PC-3 (cell line): ENCODE measurements at regions of chr2 and their contacts with region 1.

Region 1: DNA sequence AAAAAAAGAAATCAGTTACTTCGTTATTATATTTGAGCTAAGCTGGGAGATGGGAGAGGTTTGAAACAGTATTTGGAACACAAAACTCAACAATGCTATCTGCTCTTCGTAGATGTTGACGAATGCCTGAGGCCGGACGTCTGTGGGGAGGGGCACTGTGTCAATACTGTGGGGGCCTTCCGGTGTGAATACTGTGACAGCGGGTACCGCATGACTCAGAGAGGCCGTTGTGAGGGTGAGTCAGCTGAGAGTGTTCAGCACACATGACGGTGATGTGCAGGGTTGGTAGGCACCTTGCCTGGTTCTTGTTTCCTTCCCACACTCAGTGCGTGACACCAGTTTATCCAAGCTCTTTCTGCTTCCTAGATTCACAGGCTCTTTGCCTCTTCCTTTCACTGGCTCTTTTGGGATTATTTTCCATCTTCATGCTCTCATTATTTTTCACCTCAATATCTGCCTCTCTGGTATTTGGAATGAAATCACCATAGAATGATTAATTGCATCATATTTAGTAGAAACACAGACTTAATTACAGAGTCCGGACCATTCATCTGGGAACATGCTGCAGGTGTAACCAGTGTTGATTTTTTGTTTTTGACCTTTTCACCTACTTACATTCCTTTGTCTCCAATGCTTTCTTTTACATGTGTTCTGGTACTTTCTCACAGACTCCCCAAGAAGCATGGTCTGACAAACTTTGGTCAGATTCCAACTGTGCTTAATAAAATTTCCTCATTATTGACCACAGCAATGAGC is 200.6 kb upstream of the RASGRP3 start:
- DNase-seq: peak; percentile 99
- ATAC-seq: peak; percentile 99
- H3K4me3 ChIP-seq: no peak overlapping the region
- H3K27ac ChIP-seq: peak overlapping the region; percentile 99
- H3K4me1 ChIP-seq: peaks cover 37% of the 10 kb centered on the region
- H3K27me3 ChIP-seq: no peaks in the 10 kb centered on the region
- CTCF ChIP-seq: no peak

Region 2: DNA sequence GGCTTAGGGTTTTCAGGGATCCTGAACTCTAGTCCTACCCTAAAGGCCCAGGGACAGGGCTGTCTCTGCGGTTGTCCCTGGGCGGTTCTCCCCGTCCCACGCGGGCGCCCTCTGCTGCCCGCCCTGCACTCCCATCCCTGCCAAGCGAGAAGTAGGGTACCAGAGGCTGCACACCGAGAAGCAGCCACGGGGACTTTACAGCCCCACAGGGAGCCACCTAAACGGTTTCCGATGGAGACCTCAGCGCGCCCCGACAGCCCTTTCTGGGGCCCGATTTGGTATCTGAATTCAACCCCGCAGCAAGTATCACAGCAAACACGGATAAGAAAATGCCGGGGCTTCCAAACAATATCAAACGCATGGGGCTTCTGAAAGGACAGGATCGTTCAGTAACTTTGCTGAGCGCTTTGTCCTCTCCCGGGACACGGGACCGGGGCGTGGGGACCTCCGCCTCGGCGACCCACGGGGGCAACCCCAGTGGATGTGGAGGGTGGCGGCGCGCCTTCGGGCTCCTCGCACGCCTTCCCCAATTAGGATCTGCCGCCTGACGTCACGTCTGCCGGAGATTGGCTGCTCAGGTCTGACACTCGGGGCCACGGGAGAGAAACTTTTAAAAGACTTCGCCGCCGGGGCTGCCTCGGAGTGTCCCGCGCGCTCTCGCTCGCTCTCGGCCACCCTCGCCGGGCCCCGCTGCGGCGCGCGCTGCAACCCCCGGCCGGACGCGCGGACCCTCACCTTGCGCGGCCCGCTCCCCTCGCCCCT is 329.4 kb before region 1 on chr2 and contains the start of gene LTBP1:
- CTCF ChIA-PET with region 1: no interaction called
- POLR2A ChIA-PET with region 1: no interaction called
- intact Hi-C with region 1: loop called (anchors 10 kb)
- DNase-seq: peak; percentile 80
- ATAC-seq: peak; percentile 75
- H3K4me3 ChIP-seq: peak within 1 kb of the TSS; percentile 72
- H3K27ac ChIP-seq: 0 out of 2 replicates have a peak within 1 kb of the TSS, but pooled peaks have one; percentile 21
- H3K4me1 ChIP-seq: peaks cover 7% of the 10 kb centered on the region
- H3K27me3 ChIP-seq: no peaks in the 10 kb centered on the region
- CTCF ChIP-seq: peak; percentile 95
- total RNA-seq, gene LTBP1: 34.0 and 45.9 TPM in 2 replicates

Region 3: GRCh38 chr2:33134086-33134771 is 141.6 kb before region 1 on chr2:
- CTCF ChIA-PET with region 1: no interaction called
- POLR2A ChIA-PET with region 1: no interaction called
- intact Hi-C with region 1: loop called (anchors 2 kb)
- DNase-seq: peak; percentile 98
- ATAC-seq: peak; percentile 88
- H3K4me3 ChIP-seq: peak overlapping the region; percentile 75
- H3K27ac ChIP-seq: peak overlapping the region; percentile 89
- H3K4me1 ChIP-seq: peaks cover 57% of the 10 kb centered on the region
- H3K27me3 ChIP-seq: no peaks in the 10 kb centered on the region
- CTCF ChIP-seq: peak; percentile 51

Region 4: DNA sequence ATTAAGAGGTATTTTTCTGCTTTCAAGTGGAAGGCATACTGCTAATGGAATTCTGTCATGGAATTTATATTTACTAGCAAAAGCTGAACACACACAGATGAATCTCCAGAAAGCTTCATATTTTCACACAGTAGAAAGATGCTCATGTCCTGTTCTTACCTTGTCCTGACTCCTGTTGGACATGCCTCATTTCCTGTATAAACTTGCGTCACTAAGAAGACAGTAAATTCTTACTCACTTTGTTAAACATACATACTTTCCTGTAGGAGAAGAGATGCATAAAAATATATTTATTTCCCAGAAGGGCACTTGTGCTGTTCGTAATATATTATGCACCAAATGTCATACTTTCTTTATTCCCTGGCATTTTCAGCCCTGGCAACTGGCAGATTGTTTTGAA is 37.8 kb before region 1 on chr2:
- CTCF ChIA-PET with region 1: no interaction called
- POLR2A ChIA-PET with region 1: no interaction called
- intact Hi-C with region 1: loop called (anchors 2 kb)
- DNase-seq: peak; percentile 89
- ATAC-seq: peak; percentile 79
- H3K4me3 ChIP-seq: no peak overlapping the region
- H3K27ac ChIP-seq: peak overlapping the region; percentile 98
- H3K4me1 ChIP-seq: peaks cover 51% of the 10 kb centered on the region
- H3K27me3 ChIP-seq: no peaks in the 10 kb centered on the region
- CTCF ChIP-seq: no peak

Region 5: GRCh38 chr2:33457556-33458247 is 181.8 kb after region 1 on chr2:
- CTCF ChIA-PET with region 1: no interaction called
- POLR2A ChIA-PET with region 1: no interaction called
- intact Hi-C with region 1: no loop called
- DNase-seq: no peak
- ATAC-seq: no peak
- H3K4me3 ChIP-seq: no peak overlapping the region
- H3K27ac ChIP-seq: no peak overlapping the region
- H3K4me1 ChIP-seq: peaks cover 5% of the 10 kb centered on the region; the same call in 1 of the 2 replicates
- H3K27me3 ChIP-seq: no peaks in the 10 kb centered on the region
- CTCF ChIP-seq: no peak

Region 6: DNA sequence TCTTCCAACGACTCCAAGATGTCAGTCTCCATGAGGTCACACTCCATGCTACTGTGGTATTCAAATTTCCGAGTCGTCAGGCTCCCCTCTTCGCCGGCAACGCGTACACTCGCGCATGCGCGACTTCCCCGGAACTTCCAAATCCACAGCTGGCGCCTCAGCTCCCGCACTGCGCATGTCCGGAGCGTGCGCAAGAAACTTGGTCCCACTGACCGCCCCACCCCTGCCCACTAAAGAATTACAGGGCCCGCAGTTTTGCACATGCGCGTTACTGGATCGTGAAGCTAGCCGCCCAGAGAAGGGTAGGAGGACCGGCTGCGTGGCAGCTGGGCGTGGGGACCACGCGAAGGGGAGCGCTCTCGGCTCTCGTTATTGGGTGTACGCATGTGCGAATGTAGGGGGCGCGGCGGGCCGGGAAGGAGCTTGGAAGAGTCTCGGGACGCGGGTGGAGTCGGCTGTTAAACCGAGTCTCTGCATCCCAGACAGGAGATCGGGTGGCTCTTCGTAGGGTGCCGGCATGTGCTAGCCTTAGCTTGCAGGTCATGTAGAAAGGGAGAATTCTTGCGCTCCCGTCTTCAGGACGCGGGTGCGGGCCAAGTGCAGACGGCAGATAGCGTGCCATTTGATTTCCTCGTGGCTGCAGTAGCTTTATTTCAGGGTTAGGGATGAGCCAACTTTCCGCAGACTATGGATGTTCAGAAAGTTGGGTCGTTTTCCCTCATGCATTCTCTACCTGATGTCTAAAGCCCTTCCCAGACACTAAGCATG is 323.5 kb after region 1 on chr2 and contains the start of gene FAM98A:
- CTCF ChIA-PET with region 1: no interaction called
- POLR2A ChIA-PET with region 1: interaction called, 3 read pairs
- intact Hi-C with region 1: loop called (anchors 10 kb)
- DNase-seq: peak; percentile 99
- ATAC-seq: peak; percentile 93
- H3K4me3 ChIP-seq: peak within 1 kb of the TSS; percentile 93
- H3K27ac ChIP-seq: peak within 1 kb of the TSS; percentile 37
- H3K4me1 ChIP-seq: peaks cover 16% of the 10 kb centered on the region
- H3K27me3 ChIP-seq: no peaks in the 10 kb centered on the region
- CTCF ChIP-seq: no peak; the same call in 1 of the 2 replicates
- total RNA-seq, gene FAM98A: 22.4 and 30.1 TPM in 2 replicates